ENCODE measurements at regions of chr1 and their contacts with region 1.

Region 1: GRCh38 chr1:2412519-2413233 is at the start of gene PEX10:
- ATAC-seq: peak; percentile 82 to 91 (median 86)
- H3K4me3 ChIP-seq: peak within 1 kb of the TSS; percentile 77 to 99 (median 98)
- H3K27ac ChIP-seq: peak within 1 kb of the TSS; percentile 83 to 95
- H3K4me1 ChIP-seq: peaks cover 23 to 24% of the 10 kb centered on the region in 2 donors
- total RNA-seq, gene PEX10: 11.3 to 27.8 (median 20.9) TPM

Region 2: DNA sequence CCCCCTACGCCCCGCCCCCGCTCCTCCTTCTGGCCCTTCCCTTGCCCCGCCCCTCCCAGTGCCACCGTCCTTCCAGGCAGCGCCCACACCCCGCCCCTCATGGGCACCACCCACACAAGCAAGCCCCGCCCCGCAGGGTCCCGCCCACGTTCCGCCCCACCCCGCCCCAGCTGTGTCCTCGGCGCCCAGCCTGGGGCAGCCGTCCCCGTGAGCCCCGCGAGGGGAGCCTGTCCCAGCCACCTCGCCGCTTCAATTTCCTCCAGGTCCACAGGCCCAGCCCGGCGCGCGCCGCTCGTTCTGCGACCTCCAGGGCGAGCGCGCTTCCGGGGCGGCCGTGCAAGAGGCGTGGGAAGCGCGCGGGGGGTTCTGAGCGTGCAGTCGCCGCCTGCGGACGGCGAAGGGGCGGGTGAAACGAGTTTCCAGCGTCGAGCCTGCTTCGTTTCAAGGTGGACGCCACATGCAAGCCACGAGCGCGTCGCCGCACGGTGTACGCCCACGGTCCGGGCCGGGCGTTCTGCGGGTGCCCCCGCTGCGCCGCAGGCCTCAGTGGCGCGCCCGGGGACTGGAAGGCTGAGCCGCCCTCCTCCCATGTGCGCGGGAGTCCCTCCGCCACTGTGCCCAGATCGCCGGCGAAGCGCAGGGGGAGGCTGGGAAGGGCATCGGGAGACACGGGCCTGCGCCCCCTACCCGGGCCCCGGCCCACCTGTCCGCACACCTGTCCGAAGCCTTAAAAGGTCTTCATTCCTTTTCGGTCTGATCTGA is 207.3 kb before region 1 on chr1:
- in situ Hi-C with region 1: no loop called
- ATAC-seq: peak; percentile 25 to 73 (median 65)
- H3K4me3 ChIP-seq: peak overlapping the region; percentile 2 to 17 (median 14)
- H3K27ac ChIP-seq: peak overlapping the region; percentile 17 to 19
- H3K4me1 ChIP-seq: peaks cover 28 to 56% of the 10 kb centered on the region in 2 donors

Region 3: DNA sequence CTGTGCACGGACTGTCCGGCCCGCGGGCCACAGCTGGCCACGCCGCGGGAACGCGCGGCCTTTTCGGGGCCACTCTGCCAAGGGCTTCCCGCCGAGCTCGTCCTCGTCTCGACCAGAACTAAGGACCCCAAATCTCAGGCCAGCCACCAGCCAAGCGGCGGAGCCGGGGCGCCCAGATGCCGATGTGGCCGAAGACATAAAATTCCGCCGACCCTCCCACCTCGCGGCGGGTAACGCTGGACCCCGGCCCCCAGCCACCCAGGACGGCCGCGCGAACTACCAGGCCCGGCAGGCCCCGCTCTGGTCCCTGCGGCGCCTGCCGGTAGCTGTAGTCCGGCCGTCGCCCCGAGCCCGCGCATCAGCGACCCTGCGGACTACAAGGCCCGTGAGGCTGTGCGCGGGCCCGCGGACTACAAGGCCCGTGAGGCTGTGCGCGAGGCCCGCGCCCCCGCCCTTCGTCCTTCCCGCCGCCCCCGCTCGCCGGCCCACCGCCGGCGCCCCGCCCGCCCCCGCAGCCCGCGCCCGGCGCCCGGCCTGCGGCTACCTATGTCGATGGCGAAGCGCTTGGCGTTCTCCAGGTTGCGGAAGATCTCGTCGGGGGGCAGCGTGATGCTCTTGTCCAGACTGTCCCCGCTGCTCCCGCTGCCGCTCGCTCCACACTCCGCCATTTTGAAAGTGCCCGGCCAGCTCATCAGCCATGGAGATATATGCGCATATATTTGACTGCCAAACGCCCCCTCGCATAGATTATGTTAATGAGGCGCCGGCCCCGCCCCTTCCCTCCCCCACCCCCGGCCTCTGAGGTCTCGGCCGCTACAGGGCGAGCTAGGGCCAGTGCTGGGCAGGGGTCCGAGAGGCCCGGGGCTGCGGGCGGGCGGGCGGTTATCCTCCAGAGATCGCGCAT is 113.5 kb after region 1 on chr1 and contains the start of gene PANK4:
- in situ Hi-C with region 1: loop called in 2 of 9 experiments (anchors 25 kb)
- ATAC-seq: peak; percentile 76 to 94 (median 78)
- H3K4me3 ChIP-seq: peak within 1 kb of the TSS; percentile 60 to 91 (median 80)
- H3K27ac ChIP-seq: peak within 1 kb of the TSS; percentile 97 to 98
- H3K4me1 ChIP-seq: peaks cover 52 to 55% of the 10 kb centered on the region in 2 donors
- total RNA-seq, gene PANK4: 24.9 to 44.0 (median 37.3) TPM

Region 4: GRCh38 chr1:2545759-2546514 is 133.3 kb after region 1 on chr1:
- in situ Hi-C with region 1: loop called in 3 of 9 experiments (anchors 10 to 25 kb)
- ATAC-seq: peak; percentile 13 to 70 (median 40)
- H3K4me3 ChIP-seq: peak overlapping the region in 3 of 5 donors; percentile 16 to 31 (median 30)
- H3K27ac ChIP-seq: peak overlapping the region; percentile 84 to 94
- H3K4me1 ChIP-seq: peaks cover 80 to 88% of the 10 kb centered on the region in 2 donors

Region 5: DNA sequence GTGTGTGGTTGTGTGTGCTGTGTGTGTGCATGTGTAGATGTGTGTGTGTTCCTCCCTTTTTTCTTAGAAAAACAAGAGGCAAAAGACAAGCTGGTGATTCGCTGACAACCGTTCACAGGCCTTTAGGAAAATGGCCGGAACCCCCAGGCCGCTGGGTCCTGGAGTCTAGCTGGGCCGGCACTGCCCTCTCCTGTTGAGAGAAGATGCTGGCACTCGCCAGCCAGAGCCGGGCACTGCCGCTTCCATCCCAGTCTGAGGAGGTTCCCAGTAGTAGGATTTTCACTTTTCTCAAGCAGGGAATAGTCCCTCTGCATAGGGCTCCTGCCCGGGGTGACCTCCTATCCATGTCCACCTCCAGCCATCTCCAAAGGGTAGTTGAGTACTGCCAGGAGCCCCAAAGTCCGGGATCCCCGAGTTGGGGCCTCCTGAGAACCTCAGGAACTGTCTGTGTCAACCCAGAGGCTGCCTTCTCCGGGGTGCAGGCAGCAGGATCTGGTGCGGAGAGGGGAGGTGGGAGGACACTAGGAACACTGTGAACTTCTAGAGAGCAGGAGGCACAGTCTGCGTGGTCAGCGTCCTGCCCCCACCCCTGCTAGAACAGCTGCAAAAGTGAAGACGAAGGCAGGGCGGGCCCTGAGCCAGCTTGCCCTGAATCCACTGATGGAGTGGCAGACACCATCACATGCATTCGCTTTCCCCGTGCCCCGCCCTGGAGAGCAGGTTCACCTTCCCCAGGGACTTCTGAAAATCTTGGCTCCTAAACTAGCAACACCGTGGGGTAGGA is 997.7 kb after region 1 on chr1:
- in situ Hi-C with region 1: loop called in 1 of 9 experiments (anchors 25 kb)
- ATAC-seq: peak in 5 of 8 experiments; percentile 39 to 91 (median 75)
- H3K4me3 ChIP-seq: no peak overlapping the region
- H3K27ac ChIP-seq: no peak overlapping the region
- H3K4me1 ChIP-seq: no peaks in the 10 kb centered on the region

Region 6: GRCh38 chr1:3423245-3423829 is 1010.7 kb after region 1 on chr1:
- in situ Hi-C with region 1: loop called in 4 of 9 experiments (anchors 10 to 25 kb)
- ATAC-seq: peak in 7 of 8 experiments; percentile 49 to 91 (median 88)
- H3K4me3 ChIP-seq: no peak overlapping the region
- H3K27ac ChIP-seq: no peak overlapping the region
- H3K4me1 ChIP-seq: peaks cover 12 to 17% of the 10 kb centered on the region in 2 donors

Region 7: GRCh38 chr1:3431266-3431665 is 1018.6 kb after region 1 on chr1:
- in situ Hi-C with region 1: loop called in 3 of 9 experiments (anchors 10 to 25 kb)
- ATAC-seq: peak in 6 of 8 experiments; percentile 41 to 73 (median 64)
- H3K4me3 ChIP-seq: no peak overlapping the region
- H3K27ac ChIP-seq: peak overlapping the region in 1 of 2 donors; percentile 7
- H3K4me1 ChIP-seq: peaks cover 0 to 18% of the 10 kb centered on the region in 2 donors

Measured in motor neuron (in vitro differentiated cells).